GM13977 (cell line): ENCODE measurements at regions of chr15 and their contacts with region 1.

Region 1: GRCh38 chr15:89750560-89751542 is at the start of gene MESP1:
- DNase-seq: peak; percentile 98
- CTCF ChIP-seq: peak; percentile 68

Region 2: DNA sequence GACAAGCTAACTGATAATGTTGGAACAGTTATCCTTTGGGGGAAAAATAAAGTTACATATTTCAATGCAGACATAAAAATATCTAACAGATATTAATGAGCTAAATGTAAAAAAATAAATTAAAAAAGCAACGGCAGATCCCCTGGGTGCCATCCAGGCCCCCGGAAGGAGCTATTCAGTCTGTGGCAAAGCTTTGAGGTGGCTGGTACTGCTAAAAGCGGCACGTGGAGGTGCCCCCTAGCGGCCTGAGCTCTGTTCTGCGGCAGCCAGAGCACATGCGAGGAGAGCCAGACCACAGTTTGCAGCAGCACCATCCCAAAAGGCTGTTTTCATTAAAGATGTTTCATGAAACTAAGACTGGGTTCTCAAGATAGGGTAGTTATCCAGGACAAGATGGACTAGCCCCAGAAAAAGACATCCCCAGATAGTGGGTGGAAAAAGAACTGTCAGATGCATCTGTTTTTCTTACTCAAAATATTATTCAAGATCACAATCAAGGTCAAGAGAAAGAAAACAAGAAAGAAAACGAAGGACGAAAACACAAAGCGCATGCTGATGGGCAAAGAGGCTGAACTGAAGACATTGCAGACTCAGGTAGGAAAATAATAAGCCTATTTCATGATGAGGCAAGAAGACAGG is 124.2 kb after region 1 on chr15:
- in situ Hi-C with region 1: loop called (anchors 5 kb)
- DNase-seq: peak; percentile 84
- CTCF ChIP-seq: peak; percentile 95

Region 3: DNA sequence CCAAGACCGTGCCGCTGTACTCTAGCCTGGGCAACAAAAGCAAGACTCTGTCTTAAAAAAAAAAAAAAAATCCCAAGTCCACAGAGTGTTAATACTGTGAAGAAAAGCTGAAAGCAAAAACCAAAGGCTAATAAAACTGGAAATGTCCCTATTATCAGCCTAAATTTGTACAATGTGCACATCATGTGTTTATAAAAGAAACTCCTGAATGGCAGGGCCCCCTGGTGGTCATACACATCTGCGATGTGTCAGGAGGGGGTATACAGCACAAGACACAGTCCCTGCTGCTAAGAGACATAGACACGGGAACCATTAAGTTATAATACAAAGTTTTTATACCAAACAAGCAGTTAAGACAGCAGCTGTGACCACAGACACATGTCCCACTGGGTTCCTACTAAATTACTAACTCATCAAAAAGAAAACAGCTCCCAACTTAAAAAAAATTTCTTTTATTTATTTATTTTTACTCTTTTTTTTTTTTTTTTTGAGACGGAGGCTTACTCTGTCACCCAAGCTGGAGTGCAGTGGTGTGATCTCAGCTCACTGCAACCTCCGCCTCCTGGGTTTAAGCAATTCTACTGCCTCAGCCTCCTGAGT is 320.5 kb after region 1 on chr15:
- in situ Hi-C with region 1: loop called (anchors 10 kb)
- DNase-seq: peak; percentile 81
- CTCF ChIP-seq: peak; percentile 77